ENCODE measurements at regions of chr19 and their contacts with region 1.

Region 1: DNA sequence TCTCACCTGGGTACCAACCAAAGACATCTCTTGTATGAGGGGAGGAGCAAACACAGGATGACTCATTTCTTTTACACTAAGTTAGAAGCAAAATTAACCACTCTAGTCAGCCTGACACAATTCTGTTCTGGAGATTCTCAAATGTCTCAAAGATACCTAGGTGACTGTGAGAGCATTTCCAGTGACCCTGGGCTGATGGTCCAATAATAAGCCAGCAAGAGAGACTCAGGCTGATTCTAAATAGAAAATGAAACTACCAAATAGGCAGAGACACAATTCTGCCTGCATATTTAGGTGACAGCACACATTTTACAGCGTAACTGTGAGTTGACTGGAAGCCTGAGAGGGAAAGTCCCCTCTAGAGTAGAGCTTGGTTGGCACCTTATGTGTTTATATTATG is 16.3 kb downstream of the ZNF91 start:
- DNase-seq: no peak
- H3K4me3 ChIP-seq: no peak overlapping the region
- H3K27ac ChIP-seq: no peak overlapping the region
- H3K4me1 ChIP-seq: peaks cover 0 to 19% (median 7%) of the 10 kb centered on the region in 4 donors
- H3K27me3 ChIP-seq: no peaks in the 10 kb centered on the region
- CTCF ChIP-seq: no peak
- EP300 ChIP-seq: no peak
- POLR2A ChIP-seq: no peak

Region 2: DNA sequence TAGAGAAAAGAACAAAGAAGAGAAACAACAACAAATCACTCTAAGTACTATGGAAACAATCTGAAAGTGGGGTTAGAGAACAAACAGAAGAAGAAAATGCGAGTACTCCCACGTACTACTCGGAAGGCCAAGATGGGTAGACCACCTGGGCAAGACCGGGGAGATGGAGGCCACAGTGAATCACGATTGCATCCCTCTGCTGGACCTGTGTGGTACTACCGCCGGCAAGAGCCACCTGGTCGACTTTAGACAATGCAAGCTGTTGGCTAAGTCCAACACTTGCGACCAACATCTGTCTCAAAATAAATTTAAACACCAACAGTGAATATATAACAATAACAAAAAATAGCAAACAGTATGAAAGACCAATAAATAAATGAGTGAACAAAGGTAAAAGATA is 61.8 kb after region 1 on chr19:
- in situ Hi-C with region 1: no loop called
- intact Hi-C with region 1: no loop called
- DNase-seq: no peak
- H3K4me3 ChIP-seq: no peak overlapping the region
- H3K27ac ChIP-seq: no peak overlapping the region
- H3K4me1 ChIP-seq: no peaks in the 10 kb centered on the region
- H3K27me3 ChIP-seq: no peaks in the 10 kb centered on the region
- CTCF ChIP-seq: peak in 2 of 5 experiments; percentile 10 to 30
- EP300 ChIP-seq: no peak
- POLR2A ChIP-seq: no peak

Region 3: GRCh38 chr19:23799321-23799720 is 420.4 kb after region 1 on chr19:
- in situ Hi-C with region 1: loop called in 1 of 4 experiments (anchors 5 kb)
- intact Hi-C with region 1: no loop called
- DNase-seq: no peak
- H3K4me3 ChIP-seq: no peak overlapping the region
- H3K27ac ChIP-seq: no peak overlapping the region
- H3K4me1 ChIP-seq: no peaks in the 10 kb centered on the region
- H3K27me3 ChIP-seq: no peaks in the 10 kb centered on the region
- CTCF ChIP-seq: no peak
- EP300 ChIP-seq: no peak
- POLR2A ChIP-seq: no peak

Measured in transverse colon (tissue), 4 donors.